ENCODE measurements at regions of chr6 and their contacts with region 1.

Region 1: GRCh38 chr6:14734416-14735340 is 511.2 kb upstream of the JARID2 start:
- DNase-seq: peak; percentile 88
- H3K4me3 Mint-ChIP-seq: peak overlapping the region; percentile 54
- H3K27ac Mint-ChIP-seq: peak overlapping the region; percentile 95
- H3K4me1 Mint-ChIP-seq: peaks cover 91% of the 10 kb centered on the region
- H3K27me3 Mint-ChIP-seq: no peaks in the 10 kb centered on the region

Region 2: GRCh38 chr6:14270925-14271791 is 463.5 kb before region 1 on chr6:
- intact Hi-C with region 1: loop called (anchors 2 kb)
- DNase-seq: peak; percentile 90
- H3K4me3 Mint-ChIP-seq: peak overlapping the region; percentile 30
- H3K27ac Mint-ChIP-seq: peak overlapping the region; percentile 80
- H3K4me1 Mint-ChIP-seq: peaks cover 44% of the 10 kb centered on the region
- H3K27me3 Mint-ChIP-seq: no peaks in the 10 kb centered on the region

Region 3: GRCh38 chr6:14452567-14453527 is 281.8 kb before region 1 on chr6:
- intact Hi-C with region 1: loop called (anchors 1 kb)
- DNase-seq: peak; percentile 90
- H3K4me3 Mint-ChIP-seq: peak overlapping the region; percentile 65
- H3K27ac Mint-ChIP-seq: peak overlapping the region; percentile 95
- H3K4me1 Mint-ChIP-seq: peaks cover 81% of the 10 kb centered on the region
- H3K27me3 Mint-ChIP-seq: no peaks in the 10 kb centered on the region

Region 4: DNA sequence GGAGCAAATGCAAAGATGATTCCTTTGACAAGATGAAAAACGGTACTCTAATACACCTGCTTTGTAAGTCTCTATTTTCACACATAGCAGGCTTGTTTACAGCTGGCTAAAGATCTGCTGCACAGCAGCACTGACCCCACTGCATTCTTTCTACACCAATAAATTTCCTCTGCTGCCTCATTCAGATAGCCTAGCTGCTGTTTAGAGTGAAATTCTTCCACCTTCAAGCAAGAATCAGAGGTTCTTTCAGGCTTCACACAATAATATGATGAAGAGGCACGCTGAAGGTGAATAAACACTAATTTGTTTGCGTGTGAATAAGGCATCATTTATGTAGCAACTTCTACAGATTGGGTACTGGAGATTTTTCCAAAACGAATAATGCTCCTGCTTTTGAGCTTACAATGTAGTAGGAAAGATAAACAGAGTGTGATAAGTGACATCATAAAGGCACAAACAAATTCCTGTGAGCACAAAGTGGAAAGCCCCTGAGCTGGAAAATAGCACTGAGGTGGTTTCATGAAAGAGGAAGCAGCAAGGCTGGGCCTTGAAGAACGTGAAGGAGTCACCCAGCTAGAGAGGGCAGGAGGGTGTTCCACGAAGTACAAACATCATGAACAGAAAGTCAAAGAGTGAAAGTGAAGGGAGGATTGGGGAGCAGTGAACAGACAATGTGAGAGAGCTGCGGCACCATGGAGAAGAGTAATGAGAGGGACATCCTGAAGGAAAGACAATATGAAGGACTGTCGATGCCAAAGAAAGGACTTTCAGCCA is 73.7 kb before region 1 on chr6:
- intact Hi-C with region 1: loop called (anchors 1 kb)
- DNase-seq: peak; percentile 91
- H3K4me3 Mint-ChIP-seq: no peak overlapping the region
- H3K27ac Mint-ChIP-seq: no peak overlapping the region
- H3K4me1 Mint-ChIP-seq: peaks cover 46% of the 10 kb centered on the region
- H3K27me3 Mint-ChIP-seq: peaks cover 7% of the 10 kb centered on the region

Region 5: GRCh38 chr6:14816116-14816859 is 81.6 kb after region 1 on chr6:
- intact Hi-C with region 1: loop called (anchors 2 kb)
- DNase-seq: no peak
- H3K4me3 Mint-ChIP-seq: no peak overlapping the region
- H3K27ac Mint-ChIP-seq: no peak overlapping the region
- H3K4me1 Mint-ChIP-seq: peaks cover 26% of the 10 kb centered on the region
- H3K27me3 Mint-ChIP-seq: no peaks in the 10 kb centered on the region

Region 6: DNA sequence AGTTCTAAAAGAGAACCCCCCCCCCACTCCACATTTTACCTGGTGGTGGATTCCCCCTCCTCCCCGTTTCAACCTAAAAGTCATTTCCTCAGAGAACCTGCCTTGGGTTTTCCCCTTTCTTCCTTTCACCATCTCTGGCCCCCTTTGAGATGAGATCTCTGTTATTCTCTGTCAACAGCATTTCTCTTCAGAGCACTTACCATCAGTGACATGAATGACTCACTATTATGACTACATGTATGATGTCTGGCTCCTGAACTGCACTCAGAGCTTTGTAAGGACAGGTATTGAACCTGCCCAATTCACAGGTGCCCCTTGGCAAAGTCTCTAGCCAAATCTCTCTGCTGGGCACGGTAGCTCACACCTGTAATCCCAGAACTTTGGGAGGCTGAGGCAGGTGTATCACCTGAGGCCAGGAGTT is 449.8 kb after region 1 on chr6:
- intact Hi-C with region 1: loop called (anchors 5 kb)
- DNase-seq: peak; percentile 72
- H3K4me3 Mint-ChIP-seq: peak overlapping the region; percentile 10
- H3K27ac Mint-ChIP-seq: peak overlapping the region; percentile 92
- H3K4me1 Mint-ChIP-seq: peaks cover 16% of the 10 kb centered on the region
- H3K27me3 Mint-ChIP-seq: no peaks in the 10 kb centered on the region

Region 7: DNA sequence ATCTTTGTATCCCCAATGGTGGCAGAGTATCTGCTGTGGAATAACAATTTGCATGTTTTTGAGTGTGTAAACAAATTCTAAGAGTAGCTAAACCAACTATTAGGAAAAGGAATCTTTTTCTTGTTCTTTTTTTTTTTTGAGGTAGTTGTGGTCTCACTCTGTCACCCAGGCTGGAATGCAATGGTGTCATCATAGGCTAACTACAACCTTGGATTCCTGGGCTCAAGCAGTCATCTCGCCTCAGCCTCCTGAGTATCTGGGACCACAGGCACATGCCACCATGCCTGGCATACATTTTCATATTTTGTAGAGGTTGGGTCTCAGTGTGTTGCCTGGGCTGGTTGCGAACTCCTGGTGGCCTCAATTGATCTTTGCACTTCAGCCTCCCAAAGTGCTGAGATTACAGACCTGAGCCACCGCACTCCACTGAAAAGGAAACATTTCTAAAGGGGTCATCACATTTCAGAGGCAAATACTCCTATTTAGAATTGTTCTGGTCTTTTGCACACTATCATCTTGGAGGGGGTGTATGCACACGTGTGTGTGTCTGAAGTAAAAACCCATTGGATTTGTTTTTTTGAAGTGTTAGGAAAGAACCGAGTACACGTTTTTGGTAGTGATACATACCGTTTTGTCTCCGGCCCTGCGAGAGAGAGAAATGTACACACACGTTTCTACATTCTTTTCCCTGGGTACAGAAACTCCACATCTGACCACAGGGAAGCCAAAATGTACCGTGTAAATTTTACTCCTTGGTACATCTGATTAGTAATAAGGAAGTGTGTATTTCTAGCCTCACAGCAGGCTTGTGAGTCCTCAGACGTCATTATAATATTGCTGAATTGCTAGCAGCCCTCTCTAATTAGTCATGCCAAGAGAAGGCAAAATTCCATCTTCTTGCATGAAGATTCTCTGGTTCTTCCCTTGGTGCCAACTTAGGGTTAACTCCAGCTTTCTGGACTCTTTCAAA is 694.7 kb after region 1 on chr6:
- intact Hi-C with region 1: loop called (anchors 10 kb)
- DNase-seq: no peak
- H3K4me3 Mint-ChIP-seq: no peak overlapping the region
- H3K27ac Mint-ChIP-seq: no peak overlapping the region
- H3K4me1 Mint-ChIP-seq: peaks cover 85% of the 10 kb centered on the region
- H3K27me3 Mint-ChIP-seq: no peaks in the 10 kb centered on the region